GM18951 (cell line): ENCODE measurements at regions of chr1 and their contacts with region 1.

Region 1: GRCh38 chr1:89444791-89445190 is 79.8 kb upstream of the LRRC8B start:
- POLR2A ChIP-seq: no peak

Region 2: GRCh38 chr1:89001510-89001909 is 443.3 kb before region 1 on chr1:
- in situ Hi-C with region 1: loop called (anchors 10 kb)
- POLR2A ChIP-seq: no peak

Region 3: GRCh38 chr1:90074137-90074536 is 629.3 kb after region 1 on chr1:
- in situ Hi-C with region 1: no loop called
- POLR2A ChIP-seq: no peak